SK-N-SH (cell line): ENCODE measurements at regions of chr9 and their contacts with region 1.

Region 1: DNA sequence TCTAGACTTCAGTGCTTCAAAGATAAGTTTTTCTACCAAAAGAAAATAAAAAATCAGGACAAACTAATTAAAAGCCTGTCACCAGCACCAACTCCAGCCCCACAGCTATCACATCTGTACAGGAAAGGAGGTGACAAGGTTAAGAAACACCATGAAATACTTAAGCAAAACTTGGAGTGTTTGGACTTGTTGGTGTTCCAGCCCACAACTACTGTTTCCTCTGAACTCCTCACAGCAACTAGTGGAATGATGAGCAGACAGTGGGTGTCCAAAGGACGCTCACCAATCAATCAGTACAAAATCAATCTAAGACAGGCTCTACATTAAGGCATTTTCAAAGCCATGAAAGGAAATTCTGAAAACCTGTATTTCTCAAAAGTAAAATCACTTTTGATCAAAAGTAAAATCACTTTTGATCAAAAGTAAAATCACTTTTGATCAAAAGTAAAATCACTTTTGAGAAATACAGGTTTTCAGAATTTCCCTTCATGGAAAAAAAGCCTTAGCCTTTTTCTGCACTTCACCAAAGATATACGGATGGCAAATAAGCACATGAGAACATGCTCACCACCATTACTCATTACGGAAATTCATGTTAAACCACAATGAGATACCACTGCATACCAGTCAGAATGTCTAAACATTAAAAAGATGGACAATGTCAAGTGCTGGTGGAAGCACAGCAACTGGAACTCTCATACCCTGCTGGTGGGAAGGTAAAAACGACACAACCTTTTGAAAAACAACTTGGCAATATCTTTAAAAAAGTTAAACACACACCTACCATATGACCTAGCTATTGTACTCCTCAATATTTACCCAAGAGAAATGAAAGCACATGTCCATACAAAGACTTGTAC is 79.7 kb downstream of the MED27 start:
- DNase-seq: no peak
- H3K4me3 ChIP-seq: no peak overlapping the region
- H3K27ac ChIP-seq: 0 out of 4 replicates have a peak overlapping the region, but pooled peaks of 1 of the 2 experiments have one; percentile 5
- H3K4me1 ChIP-seq: peaks cover 7 to 57% of the 10 kb centered on the region in 2 experiments
- H3K27me3 ChIP-seq: no peaks in the 10 kb centered on the region
- CTCF ChIP-seq: peak; percentile 22; the same call in 1 of the 2 replicates
- EP300 ChIP-seq: no peak
- RAD21 ChIP-seq: no peak

Region 2: DNA sequence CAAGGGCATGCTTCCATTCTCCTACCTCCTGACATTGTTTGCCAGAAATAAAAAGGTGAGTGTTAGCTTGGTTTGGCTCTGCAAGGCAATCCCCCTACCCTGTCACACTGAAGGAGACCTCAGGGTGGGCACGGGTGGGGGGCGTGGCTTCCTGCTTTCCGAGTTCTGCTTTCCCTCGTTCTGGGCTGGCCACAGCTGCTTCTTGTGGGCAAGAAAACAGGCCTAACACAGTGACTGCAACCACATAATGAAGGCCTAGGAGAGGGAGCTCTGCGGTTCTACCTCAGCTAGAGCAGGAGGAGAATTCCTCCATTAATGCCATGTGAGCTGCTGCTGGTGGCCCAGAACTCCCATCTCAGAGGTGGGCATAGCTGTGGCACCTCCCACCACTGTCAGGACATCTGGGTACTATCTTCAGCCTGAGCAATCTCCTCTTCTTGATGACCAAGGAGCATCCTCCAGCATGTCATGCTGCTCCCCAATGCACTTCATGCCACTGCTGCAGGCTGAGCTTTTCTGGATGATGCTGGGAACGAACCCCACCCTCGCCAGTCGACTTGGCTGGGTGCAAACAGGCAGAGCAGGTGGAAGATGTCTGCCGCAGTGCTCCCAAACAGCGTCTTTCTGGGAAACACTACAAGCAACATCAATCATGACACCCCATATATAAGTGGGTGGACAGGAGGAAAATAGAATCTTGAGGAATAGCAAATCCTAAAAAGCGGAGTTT is 120.6 kb before region 1 on chr9:
- CTCF ChIA-PET with region 1: no interaction called
- POLR2A ChIA-PET with region 1: no interaction called
- DNase-seq: no peak
- H3K4me3 ChIP-seq: no peak overlapping the region
- H3K27ac ChIP-seq: no peak overlapping the region
- H3K4me1 ChIP-seq: peaks cover 0 to 4% of the 10 kb centered on the region in 2 experiments; a peak in 1 of 4 replicates
- H3K27me3 ChIP-seq: no peaks in the 10 kb centered on the region
- CTCF ChIP-seq: no peak
- EP300 ChIP-seq: no peak
- RAD21 ChIP-seq: no peak

Region 3: DNA sequence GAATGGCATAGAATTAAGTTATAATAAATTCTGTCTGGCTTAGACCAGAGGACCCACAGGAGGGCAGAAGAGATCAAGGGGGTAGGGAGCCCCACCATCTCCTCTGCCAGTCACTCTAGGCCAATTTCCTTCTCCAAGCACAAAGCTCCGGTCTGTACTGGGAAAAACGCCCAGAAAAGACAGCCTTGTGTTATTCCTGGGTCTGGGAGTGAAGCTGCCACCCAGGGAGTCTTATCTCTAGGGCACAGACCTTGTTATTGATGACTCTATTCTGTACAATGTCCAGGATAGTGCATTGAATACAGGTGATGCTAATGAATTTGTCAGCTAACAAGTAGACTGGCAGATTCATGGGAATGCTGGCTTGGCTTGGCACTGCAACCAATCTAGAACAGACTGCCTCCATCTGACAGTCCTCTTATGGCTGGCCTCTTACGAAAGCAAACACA is 19.1 kb after region 1 on chr9:
- CTCF ChIA-PET with region 1: interaction called, 14 read pairs
- POLR2A ChIA-PET with region 1: no interaction called
- DNase-seq: no peak
- H3K4me3 ChIP-seq: no peak overlapping the region
- H3K27ac ChIP-seq: no peak overlapping the region
- H3K4me1 ChIP-seq: peaks cover 23 to 41% of the 10 kb centered on the region in 2 experiments; a peak in 3 of 4 replicates
- H3K27me3 ChIP-seq: no peaks in the 10 kb centered on the region
- CTCF ChIP-seq: peak; percentile 37
- EP300 ChIP-seq: peak in 1 of 2 experiments; percentile 75; a peak in 2 of 4 replicates
- RAD21 ChIP-seq: peak; percentile 46; the same call in 1 of the 2 replicates